Activated naive CD4-positive, alpha-beta T cell treated with anti-CD3 and anti-CD28 coated beads for 36 hours (primary cell): ENCODE measurements at regions of chr5 and their contacts with region 1.

Region 1: DNA sequence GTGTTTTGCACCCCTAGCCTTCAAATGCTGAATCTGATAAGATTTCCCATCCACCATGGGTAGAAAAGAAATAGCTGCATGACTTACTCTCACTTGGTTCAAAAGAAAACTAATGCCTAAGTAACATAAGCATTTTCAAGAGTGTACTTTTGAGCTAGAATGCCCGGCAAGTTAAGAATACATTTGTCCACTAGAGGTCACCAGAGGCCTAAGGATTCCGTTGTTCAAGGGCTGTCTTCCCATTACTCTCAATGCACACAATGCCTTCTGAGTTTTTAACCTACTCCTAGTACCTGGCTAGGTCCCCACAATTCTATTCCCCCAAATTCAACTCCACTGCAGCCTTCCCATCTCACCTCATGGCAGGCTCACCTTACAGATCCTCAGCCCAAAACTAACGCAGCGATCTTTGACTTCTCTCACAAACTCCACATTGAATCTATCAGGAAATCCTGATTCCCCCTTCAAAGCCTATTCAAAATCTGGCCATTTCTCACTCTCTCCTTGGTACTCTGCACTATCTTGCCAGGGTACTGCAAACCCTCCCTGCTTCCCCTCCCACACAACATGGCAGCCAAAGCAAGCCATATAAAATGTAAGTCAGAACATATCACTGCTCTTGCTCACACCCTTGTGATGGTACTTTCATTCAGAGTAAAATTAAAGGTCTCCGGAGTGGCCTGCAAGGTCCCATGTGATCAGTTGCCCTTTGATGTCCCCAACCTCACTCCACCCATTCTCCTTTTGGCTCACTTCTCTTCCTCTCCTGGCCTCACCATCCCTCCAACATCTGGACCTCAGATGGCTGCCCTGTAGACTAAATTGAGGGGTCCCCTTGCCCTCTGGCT is 13.4 kb downstream of the OXCT1 start:
- DNase-seq: peak; percentile 69
- H3K4me3 Mint-ChIP-seq: no peak overlapping the region
- H3K27ac Mint-ChIP-seq: no peak overlapping the region
- H3K4me1 Mint-ChIP-seq: peaks cover 26% of the 10 kb centered on the region
- H3K27me3 Mint-ChIP-seq: no peaks in the 10 kb centered on the region

Region 2: GRCh38 chr5:41869739-41870626 is 13.1 kb after region 1 on chr5 and contains the start of gene OXCT1:
- CTCF ChIA-PET with region 1: interaction called, 14 read pairs
- intact Hi-C with region 1: no loop called
- DNase-seq: peak; percentile 93
- H3K4me3 Mint-ChIP-seq: peak within 1 kb of the TSS; percentile 92
- H3K27ac Mint-ChIP-seq: peak within 1 kb of the TSS; percentile 88
- H3K4me1 Mint-ChIP-seq: peaks cover 53% of the 10 kb centered on the region
- H3K27me3 Mint-ChIP-seq: no peaks in the 10 kb centered on the region
- total RNA-seq, gene OXCT1: 76.1 to 78.8 TPM

Region 3: GRCh38 chr5:41903892-41904799 is 47.3 kb after region 1 on chr5 and contains the start of gene RIMOC1:
- CTCF ChIA-PET with region 1: interaction called, 5 read pairs
- intact Hi-C with region 1: loop called (anchors 1 kb)
- DNase-seq: peak; percentile 98
- H3K4me3 Mint-ChIP-seq: peak within 1 kb of the TSS; percentile 79
- H3K27ac Mint-ChIP-seq: peak within 1 kb of the TSS; percentile 88
- H3K4me1 Mint-ChIP-seq: peaks cover 38% of the 10 kb centered on the region
- H3K27me3 Mint-ChIP-seq: no peaks in the 10 kb centered on the region
- total RNA-seq, gene RIMOC1: 16.6 to 19.6 TPM

Region 4: DNA sequence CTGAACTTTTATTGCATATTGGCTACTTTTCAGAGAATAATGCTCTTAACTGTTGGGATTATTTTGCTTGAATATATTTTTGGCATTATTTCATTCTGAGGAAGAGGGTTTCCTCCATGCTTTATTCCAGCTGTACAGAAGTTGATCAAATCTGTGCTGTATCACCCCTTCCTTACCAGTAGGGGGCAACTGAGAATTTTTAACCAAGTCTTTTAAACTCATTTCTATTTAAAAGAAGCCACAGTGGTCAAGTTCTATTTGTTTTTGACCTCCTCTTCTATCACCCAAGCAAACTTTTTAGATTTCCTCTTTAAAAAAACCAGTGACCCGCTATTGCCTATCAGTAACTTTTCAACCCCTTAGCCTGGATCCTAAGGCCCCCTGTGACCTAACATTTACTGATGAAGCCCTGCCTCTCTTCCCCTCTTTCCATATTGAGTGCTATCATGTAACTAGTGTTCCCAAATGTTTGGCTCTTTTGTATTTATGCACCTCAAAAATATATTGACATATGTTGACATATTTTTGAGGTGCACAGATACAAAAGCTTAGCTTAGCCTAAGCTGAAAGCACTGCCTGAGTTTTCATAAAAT is 148.8 kb after region 1 on chr5:
- CTCF ChIA-PET with region 1: interaction called, 5 read pairs
- intact Hi-C with region 1: loop called (anchors 1 kb)
- DNase-seq: no peak
- H3K4me3 Mint-ChIP-seq: no peak overlapping the region
- H3K27ac Mint-ChIP-seq: no peak overlapping the region
- H3K4me1 Mint-ChIP-seq: no peaks in the 10 kb centered on the region
- H3K27me3 Mint-ChIP-seq: peaks cover 2% of the 10 kb centered on the region

Region 5: GRCh38 chr5:42518595-42519221 is 661.8 kb after region 1 on chr5:
- CTCF ChIA-PET with region 1: no interaction called
- intact Hi-C with region 1: no loop called
- DNase-seq: no peak
- H3K4me3 Mint-ChIP-seq: no peak overlapping the region
- H3K27ac Mint-ChIP-seq: no peak overlapping the region
- H3K4me1 Mint-ChIP-seq: no peaks in the 10 kb centered on the region
- H3K27me3 Mint-ChIP-seq: peaks cover 2% of the 10 kb centered on the region

Region 6: DNA sequence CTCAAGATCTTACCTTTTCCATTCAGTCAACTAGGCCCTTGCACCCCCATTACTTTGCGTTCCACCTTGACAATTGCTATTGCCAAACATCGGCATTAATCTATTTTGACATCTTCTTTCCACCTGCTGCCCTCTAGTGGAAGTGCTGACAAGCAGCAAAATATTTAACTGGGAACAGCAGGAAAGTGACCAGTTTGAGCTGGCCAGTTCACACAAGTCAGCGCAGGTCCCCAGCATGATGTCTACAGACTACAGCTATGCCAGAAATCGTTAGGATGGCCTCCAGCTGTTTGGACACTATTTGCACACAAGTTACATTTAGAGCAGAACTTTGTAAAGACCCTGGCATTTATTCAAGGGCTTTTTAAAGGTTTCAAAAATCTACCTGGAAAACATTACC is 726.5 kb after region 1 on chr5:
- CTCF ChIA-PET with region 1: no interaction called
- intact Hi-C with region 1: loop called (anchors 1 kb)
- DNase-seq: peak; percentile 50
- H3K4me3 Mint-ChIP-seq: no peak overlapping the region
- H3K27ac Mint-ChIP-seq: no peak overlapping the region
- H3K4me1 Mint-ChIP-seq: no peaks in the 10 kb centered on the region
- H3K27me3 Mint-ChIP-seq: peaks cover 14% of the 10 kb centered on the region